Posterior cingulate gyrus (tissue), 11 donors: ENCODE measurements at regions of chr6 and their contacts with region 1.

Region 1: DNA sequence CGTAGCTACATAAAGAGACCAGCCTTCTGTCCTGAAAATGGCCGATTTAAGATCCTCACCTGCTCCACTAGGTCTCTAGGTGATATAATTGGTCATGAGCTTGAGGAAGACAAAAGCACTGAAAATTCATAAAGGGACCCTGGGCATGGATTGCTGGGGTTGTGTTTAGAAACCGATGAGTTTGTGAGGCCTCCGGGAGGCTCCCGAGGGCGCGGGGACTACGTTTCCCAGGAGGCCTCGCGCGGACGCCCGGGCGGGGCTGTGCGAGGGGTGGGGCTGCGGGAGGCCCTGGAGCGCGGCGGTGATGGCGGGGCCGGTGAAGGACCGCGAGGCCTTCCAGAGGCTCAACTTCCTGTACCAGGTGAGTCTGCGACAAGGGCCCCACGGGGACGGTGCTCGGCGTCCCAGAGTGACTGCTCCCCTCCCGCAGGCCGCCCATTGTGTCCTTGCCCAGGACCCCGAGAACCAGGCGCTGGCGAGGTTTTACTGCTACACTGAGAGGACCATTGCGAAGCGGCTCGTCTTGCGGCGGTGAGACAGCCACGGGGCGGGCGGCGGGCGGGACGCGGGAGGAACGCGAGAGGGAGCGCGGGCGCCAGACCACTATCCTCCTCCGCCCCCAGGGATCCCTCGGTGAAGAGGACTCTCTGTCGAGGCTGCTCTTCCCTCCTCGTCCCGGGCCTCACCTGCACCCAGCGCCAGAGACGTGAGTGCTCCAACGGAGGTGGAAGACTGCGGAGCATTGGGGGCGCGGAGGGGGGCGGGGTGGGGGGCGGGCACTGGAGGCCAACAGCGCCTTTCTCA is at the start of gene RPP21:
- DNase-seq: peak; percentile 81 to 99 (median 91)

Region 2: GRCh38 chr6:29834564-29835436 is 510.3 kb before region 1 on chr6:
- intact Hi-C with region 1: no loop called
- DNase-seq: peak in 3 of 10 donors; percentile 44 to 73 (median 51)

Region 3: GRCh38 chr6:30326526-30327260 is 18.4 kb before region 1 on chr6 and contains the start of gene TRIM39:
- intact Hi-C with region 1: loop called (anchors 1 kb)
- DNase-seq: peak; percentile 76 to 98 (median 88)

Region 4: GRCh38 chr6:30678964-30679726 is 334.1 kb after region 1 on chr6:
- intact Hi-C with region 1: loop called (anchors 5 kb)
- DNase-seq: peak; percentile 75 to 98 (median 90)